ENCODE measurements at regions of chr14 and their contacts with region 1.

Region 1: DNA sequence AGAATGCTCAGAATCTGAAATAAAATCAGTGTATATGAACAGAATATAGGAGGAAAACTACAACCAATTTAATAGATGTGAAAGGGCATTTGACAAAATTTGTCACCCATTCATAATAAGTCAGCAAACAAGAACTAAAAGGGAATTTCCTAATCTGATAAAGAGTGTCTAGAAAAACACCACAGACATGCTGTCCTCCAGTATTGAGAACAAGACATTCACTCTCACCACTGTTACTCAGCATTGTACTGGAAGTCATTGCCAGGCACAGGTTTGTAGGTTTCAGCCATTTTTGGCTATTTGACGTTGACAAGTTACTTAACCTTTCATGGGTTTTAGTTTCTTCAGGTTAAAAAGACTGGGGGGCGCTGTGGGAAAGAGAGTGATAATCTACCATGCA is 13.2 kb downstream of the EIF2S1 start:
- DNase-seq: no peak
- ATAC-seq: no peak
- H3K4me3 Mint-ChIP-seq: no peak overlapping the region
- H3K27ac Mint-ChIP-seq: no peak overlapping the region
- H3K4me1 Mint-ChIP-seq: peaks cover 12% of the 10 kb centered on the region
- H3K27me3 Mint-ChIP-seq: no peaks in the 10 kb centered on the region

Region 2: GRCh38 chr14:67269298-67270061 is 103.9 kb before region 1 on chr14:
- CTCF ChIA-PET with region 1: no interaction called
- POLR2A ChIA-PET with region 1: no interaction called
- DNase-seq: no peak
- ATAC-seq: no peak
- H3K4me3 Mint-ChIP-seq: no peak overlapping the region
- H3K27ac Mint-ChIP-seq: no peak overlapping the region
- H3K4me1 Mint-ChIP-seq: no peaks in the 10 kb centered on the region
- H3K27me3 Mint-ChIP-seq: no peaks in the 10 kb centered on the region

Region 3: GRCh38 chr14:67359775-67360648 is 13.3 kb before region 1 on chr14 and contains the starts of genes ATP6V1D and EIF2S1:
- CTCF ChIA-PET with region 1: interaction called, 25 read pairs
- POLR2A ChIA-PET with region 1: interaction called, 14 read pairs
- DNase-seq: peak; percentile 100
- ATAC-seq: peak; percentile 92
- H3K4me3 Mint-ChIP-seq: peak within 1 kb of the TSS; percentile 93
- H3K27ac Mint-ChIP-seq: peak within 1 kb of the TSS; percentile 96
- H3K4me1 Mint-ChIP-seq: peaks cover 51% of the 10 kb centered on the region
- H3K27me3 Mint-ChIP-seq: no peaks in the 10 kb centered on the region
- total RNA-seq, gene ATP6V1D: 36.5 to 43.6 TPM
- total RNA-seq, gene EIF2S1: 136 to 150 TPM

Region 4: DNA sequence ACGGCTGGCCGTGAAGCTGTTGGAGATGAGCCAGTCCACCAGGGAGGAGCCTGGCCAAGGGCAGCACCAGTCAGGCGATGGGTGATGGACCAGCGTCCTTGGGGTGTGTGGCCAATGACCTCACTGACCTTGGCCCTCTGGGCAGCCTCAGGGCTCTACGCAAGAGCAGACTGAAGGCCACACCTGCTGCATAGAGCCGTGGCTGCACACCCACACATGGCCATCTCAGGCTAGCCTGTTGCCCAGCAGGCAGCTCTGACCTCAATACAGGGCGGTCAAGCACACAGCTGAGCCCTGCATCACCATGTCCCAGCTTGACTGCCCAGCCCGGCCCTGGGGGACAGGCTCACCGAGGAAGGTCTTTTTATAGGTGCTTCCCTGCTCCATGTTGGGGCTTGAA is 19.5 kb after region 1 on chr14:
- CTCF ChIA-PET with region 1: no interaction called
- POLR2A ChIA-PET with region 1: no interaction called
- DNase-seq: no peak
- ATAC-seq: no peak
- H3K4me3 Mint-ChIP-seq: no peak overlapping the region
- H3K27ac Mint-ChIP-seq: no peak overlapping the region
- H3K4me1 Mint-ChIP-seq: peaks cover 3% of the 10 kb centered on the region
- H3K27me3 Mint-ChIP-seq: peaks cover 3% of the 10 kb centered on the region